Panc1 (cell line): ENCODE measurements at regions of chr12 and their contacts with region 1.

Region 1: GRCh38 chr12:66693901-66694675 is 15.2 kb upstream of the GRIP1 start:
- DNase-seq: peak; percentile 32
- ATAC-seq: peak; percentile 96
- H3K4me3 ChIP-seq: no peak overlapping the region
- H3K27ac ChIP-seq: no peak overlapping the region
- H3K4me1 ChIP-seq: no peaks in the 10 kb centered on the region
- H3K27me3 ChIP-seq: peaks cover 7% of the 10 kb centered on the region
- CTCF ChIP-seq: peak; percentile 76

Region 2: DNA sequence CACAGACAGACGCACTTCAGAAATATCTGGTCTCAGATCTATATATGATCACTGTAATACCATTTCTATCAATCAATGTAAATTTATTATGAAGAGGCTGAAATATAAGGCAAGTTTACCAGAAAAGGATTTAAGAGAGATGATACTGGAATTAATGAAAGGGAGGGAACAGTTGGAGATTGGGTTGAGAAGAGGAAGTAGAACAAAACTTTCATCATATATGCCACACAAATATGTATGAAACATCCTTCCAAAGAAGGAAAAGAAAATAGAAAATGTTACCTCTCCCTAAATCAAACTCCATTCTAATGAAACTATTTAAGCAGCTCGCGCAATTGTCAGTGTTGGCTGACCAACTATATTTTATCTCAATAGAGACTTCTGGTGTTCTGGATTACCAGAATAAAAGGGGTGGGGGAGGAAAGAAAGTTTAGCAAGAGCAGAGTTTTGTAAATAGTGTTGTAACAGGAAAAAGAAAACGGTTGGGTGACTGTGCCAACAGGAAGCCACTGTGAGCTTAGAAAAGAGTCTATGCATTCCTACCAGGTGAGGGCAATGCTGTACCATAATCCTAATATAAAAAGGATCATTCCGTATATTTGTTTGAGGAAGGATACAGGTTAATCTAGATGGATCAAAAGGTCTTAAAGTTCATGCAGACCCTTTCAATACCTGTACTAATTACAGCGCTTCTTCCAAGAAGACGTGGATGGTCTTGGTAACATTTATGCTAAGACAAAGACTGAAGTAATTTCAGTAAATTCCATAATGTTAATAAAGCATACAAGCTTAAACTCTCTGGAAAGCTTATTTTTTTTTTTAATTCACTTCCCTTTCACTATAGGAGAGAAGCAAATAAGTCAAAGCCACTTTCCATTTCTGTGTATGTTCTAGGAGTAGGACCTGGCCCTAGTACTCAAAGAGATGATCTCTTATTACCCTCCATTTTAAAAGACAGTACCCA is 549.0 kb before region 1 on chr12:
- CTCF ChIA-PET with region 1: no interaction called
- POLR2A ChIA-PET with region 1: no interaction called
- in situ Hi-C with region 1: no loop called
- intact Hi-C with region 1: loop called (anchors 5 kb)
- DNase-seq: peak; percentile 41
- ATAC-seq: peak; percentile 73; the same call in 1 of the 2 replicates
- H3K4me3 ChIP-seq: no peak overlapping the region
- H3K27ac ChIP-seq: peak overlapping the region; percentile 73
- H3K4me1 ChIP-seq: peaks cover 3% of the 10 kb centered on the region; the same call in 1 of the 2 replicates
- H3K27me3 ChIP-seq: no peaks in the 10 kb centered on the region
- CTCF ChIP-seq: peak; percentile 61; the same call in 1 of the 2 replicates

Region 3: DNA sequence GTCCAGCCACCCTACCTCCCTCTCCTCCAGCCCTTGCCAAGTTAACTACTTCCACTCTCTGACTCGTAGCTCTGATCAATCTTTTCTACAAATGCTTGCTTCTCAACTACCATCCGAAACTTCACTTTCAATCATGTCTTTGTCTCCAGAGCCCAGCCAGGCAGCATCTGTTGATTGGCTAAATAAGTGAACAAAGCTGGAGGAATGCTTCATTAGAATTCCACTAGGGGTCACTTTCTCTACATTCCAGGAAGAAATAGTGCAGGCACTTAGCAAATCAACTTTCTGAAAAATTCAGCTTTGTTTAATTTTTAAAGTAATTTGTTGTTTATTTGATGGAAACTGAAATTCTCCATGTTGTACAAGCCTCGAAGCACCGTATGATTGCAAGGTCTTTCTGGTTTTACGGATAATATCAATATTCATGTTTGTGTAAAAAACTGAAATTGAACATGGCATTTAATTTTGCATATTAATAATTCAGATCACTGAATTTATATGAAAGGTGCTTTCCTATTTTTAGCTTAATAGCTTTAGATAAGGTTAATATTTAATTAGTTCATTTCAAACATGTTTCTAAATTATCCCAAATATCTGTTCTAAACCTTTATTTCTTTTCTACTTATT is 424.2 kb before region 1 on chr12:
- CTCF ChIA-PET with region 1: no interaction called
- POLR2A ChIA-PET with region 1: no interaction called
- in situ Hi-C with region 1: no loop called
- intact Hi-C with region 1: loop called (anchors 5 kb)
- DNase-seq: peak; percentile 8
- ATAC-seq: peak; percentile 70; the same call in 1 of the 2 replicates
- H3K4me3 ChIP-seq: no peak overlapping the region
- H3K27ac ChIP-seq: no peak overlapping the region
- H3K4me1 ChIP-seq: no peaks in the 10 kb centered on the region
- H3K27me3 ChIP-seq: peaks cover 8% of the 10 kb centered on the region
- CTCF ChIP-seq: peak; percentile 78

Region 4: GRCh38 chr12:66352197-66352596 is 341.9 kb before region 1 on chr12:
- CTCF ChIA-PET with region 1: no interaction called
- POLR2A ChIA-PET with region 1: no interaction called
- in situ Hi-C with region 1: no loop called
- intact Hi-C with region 1: loop called (anchors 5 kb)
- DNase-seq: no peak
- ATAC-seq: peak; percentile 91
- H3K4me3 ChIP-seq: no peak overlapping the region
- H3K27ac ChIP-seq: no peak overlapping the region
- H3K4me1 ChIP-seq: no peaks in the 10 kb centered on the region
- H3K27me3 ChIP-seq: no peaks in the 10 kb centered on the region
- CTCF ChIP-seq: peak; percentile 72

Region 5: DNA sequence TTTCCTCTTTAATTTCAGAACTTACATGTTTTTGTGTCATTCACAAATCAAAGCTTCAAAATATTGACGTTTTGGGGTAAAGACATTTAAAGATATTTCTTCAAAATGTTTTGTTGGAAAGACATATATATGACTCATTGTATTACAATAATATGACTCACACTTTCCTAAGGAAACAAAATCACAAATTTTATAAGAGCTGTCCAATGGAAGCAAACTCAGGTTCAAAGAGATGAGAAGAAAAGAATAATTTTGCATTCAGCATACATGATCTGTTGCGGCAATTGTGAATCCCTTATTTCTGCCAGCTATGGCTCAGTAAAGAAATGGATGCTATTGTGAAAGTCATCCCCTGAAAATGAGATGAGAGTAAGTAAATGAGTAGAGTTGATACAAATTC is 97.9 kb before region 1 on chr12:
- CTCF ChIA-PET with region 1: no interaction called
- POLR2A ChIA-PET with region 1: no interaction called
- in situ Hi-C with region 1: no loop called
- intact Hi-C with region 1: no loop called
- DNase-seq: no peak
- ATAC-seq: no peak
- H3K4me3 ChIP-seq: no peak overlapping the region
- H3K27ac ChIP-seq: no peak overlapping the region
- H3K4me1 ChIP-seq: no peaks in the 10 kb centered on the region
- H3K27me3 ChIP-seq: no peaks in the 10 kb centered on the region
- CTCF ChIP-seq: no peak

Region 6: GRCh38 chr12:66860752-66861750 is 167.0 kb after region 1 on chr12:
- CTCF ChIA-PET with region 1: no interaction called
- POLR2A ChIA-PET with region 1: interaction called, 8 read pairs
- in situ Hi-C with region 1: no loop called
- intact Hi-C with region 1: loop called (anchors 5 kb)
- DNase-seq: peak; percentile 41
- ATAC-seq: no peak
- H3K4me3 ChIP-seq: no peak overlapping the region
- H3K27ac ChIP-seq: no peak overlapping the region
- H3K4me1 ChIP-seq: no peaks in the 10 kb centered on the region
- H3K27me3 ChIP-seq: peaks cover 2% of the 10 kb centered on the region; the same call in 1 of the 2 replicates
- CTCF ChIP-seq: peak; percentile 89